ENCODE measurements at regions of chr11 and their contacts with region 1.

Region 1: DNA sequence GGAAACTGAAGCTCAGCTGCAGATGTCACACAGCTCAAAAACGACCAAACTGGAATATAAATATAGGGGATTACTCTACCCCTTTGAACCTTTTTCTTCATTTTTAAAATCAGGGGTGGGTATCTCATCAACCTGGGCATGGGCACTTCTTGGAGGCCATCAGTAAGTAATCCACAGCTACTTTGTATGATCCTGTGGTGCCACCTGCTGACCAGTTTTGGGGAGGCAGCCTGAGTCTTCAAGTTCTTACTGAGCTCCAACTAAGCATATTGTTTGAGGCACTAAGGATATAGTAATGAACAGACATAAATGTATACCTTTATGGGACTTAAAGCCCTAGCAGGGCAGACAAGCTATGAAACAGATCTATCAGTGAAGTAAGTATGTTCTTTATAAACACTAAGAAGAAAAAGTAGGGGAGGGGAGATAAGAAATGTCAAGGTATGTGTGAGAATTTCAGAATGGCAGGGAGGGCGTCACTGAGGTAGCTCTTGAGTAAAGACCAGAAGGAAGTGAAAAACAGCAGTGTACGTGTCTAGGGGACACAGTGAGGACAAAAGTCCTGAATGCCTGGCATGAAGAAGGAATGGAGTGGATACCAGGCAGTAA is 18.4 kb downstream of the TUB start:
- DNase-seq: peak; percentile 84
- ATAC-seq: peak; percentile 78
- H3K4me3 Mint-ChIP-seq: no peak overlapping the region
- H3K27ac Mint-ChIP-seq: no peak overlapping the region
- H3K4me1 Mint-ChIP-seq: no peaks in the 10 kb centered on the region
- H3K27me3 Mint-ChIP-seq: no peaks in the 10 kb centered on the region
- CTCF ChIP-seq: no peak; the same call in none of the 2 replicates

Region 2: GRCh38 chr11:7892840-7893254 is 206.5 kb before region 1 on chr11:
- CTCF ChIA-PET with region 1: interaction called, 12 read pairs
- POLR2A ChIA-PET with region 1: no interaction called
- DNase-seq: no peak
- ATAC-seq: peak; percentile 83
- H3K4me3 Mint-ChIP-seq: no peak overlapping the region
- H3K27ac Mint-ChIP-seq: no peak overlapping the region
- H3K4me1 Mint-ChIP-seq: peaks cover 6% of the 10 kb centered on the region
- H3K27me3 Mint-ChIP-seq: peaks cover 14% of the 10 kb centered on the region
- CTCF ChIP-seq: peak; percentile 52

Region 3: GRCh38 chr11:7936615-7937014 is 162.8 kb before region 1 on chr11:
- CTCF ChIA-PET with region 1: no interaction called
- POLR2A ChIA-PET with region 1: no interaction called
- DNase-seq: no peak
- ATAC-seq: no peak
- H3K4me3 Mint-ChIP-seq: no peak overlapping the region
- H3K27ac Mint-ChIP-seq: no peak overlapping the region
- H3K4me1 Mint-ChIP-seq: peaks cover 6% of the 10 kb centered on the region; the same call in 1 of the 2 replicates
- H3K27me3 Mint-ChIP-seq: no peaks in the 10 kb centered on the region
- CTCF ChIP-seq: no peak

Region 4: DNA sequence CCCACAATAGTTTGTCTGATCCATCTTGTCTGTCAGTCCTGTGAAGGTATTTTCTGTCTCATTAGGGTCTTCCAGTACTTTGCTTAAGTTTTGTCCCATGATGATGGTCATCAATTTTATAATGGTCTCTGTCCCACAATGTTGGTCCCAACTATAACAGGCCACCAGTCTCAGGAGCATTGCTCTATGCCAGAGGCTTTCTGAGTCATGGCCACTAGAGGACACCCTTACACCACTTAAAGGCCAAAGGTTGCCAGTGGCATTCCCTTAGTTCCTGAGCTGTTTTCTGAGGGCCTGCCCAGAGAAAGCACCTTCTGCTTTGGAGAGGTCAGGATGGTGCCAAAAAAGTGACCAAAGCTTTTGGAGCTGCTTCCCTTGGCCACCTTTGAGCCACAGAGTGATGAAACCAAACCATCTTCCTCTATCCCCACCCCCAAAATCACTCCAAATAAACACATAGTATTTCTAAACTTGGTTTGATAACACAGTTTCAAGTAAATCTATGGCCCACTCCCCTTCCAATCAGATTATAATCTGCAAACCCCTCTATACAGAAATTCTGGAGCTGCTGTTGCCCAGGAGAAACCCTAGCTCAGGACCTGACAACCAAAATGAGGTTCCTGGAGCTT is 92.9 kb before region 1 on chr11:
- CTCF ChIA-PET with region 1: interaction called, 133 read pairs
- POLR2A ChIA-PET with region 1: interaction called, 3 read pairs
- DNase-seq: peak; percentile 75
- ATAC-seq: peak; percentile 96
- H3K4me3 Mint-ChIP-seq: no peak overlapping the region
- H3K27ac Mint-ChIP-seq: no peak overlapping the region
- H3K4me1 Mint-ChIP-seq: no peaks in the 10 kb centered on the region
- H3K27me3 Mint-ChIP-seq: no peaks in the 10 kb centered on the region; the same call in 1 of the 2 replicates
- CTCF ChIP-seq: peak; percentile 71

Region 5: GRCh38 chr11:8033305-8034105 is 65.9 kb before region 1 on chr11:
- CTCF ChIA-PET with region 1: interaction called, 73 read pairs
- POLR2A ChIA-PET with region 1: interaction called, 5 read pairs
- DNase-seq: peak; percentile 78
- ATAC-seq: peak; percentile 92
- H3K4me3 Mint-ChIP-seq: peak overlapping the region; percentile 51
- H3K27ac Mint-ChIP-seq: no peak overlapping the region
- H3K4me1 Mint-ChIP-seq: peaks cover 15% of the 10 kb centered on the region
- H3K27me3 Mint-ChIP-seq: peaks cover 10% of the 10 kb centered on the region
- CTCF ChIP-seq: peak; percentile 29; the same call in 1 of the 2 replicates

Region 6: GRCh38 chr11:8070417-8071115 is 28.8 kb before region 1 on chr11:
- CTCF ChIA-PET with region 1: interaction called, 18 read pairs
- POLR2A ChIA-PET with region 1: no interaction called
- DNase-seq: no peak
- ATAC-seq: peak; percentile 40
- H3K4me3 Mint-ChIP-seq: no peak overlapping the region
- H3K27ac Mint-ChIP-seq: no peak overlapping the region
- H3K4me1 Mint-ChIP-seq: peaks cover 48% of the 10 kb centered on the region
- H3K27me3 Mint-ChIP-seq: peaks cover 12% of the 10 kb centered on the region; the same call in 1 of the 2 replicates
- CTCF ChIP-seq: no peak

Region 7: GRCh38 chr11:8111636-8112035 is 12.2 kb after region 1 on chr11:
- CTCF ChIA-PET with region 1: interaction called, 18 read pairs
- POLR2A ChIA-PET with region 1: no interaction called
- DNase-seq: no peak
- ATAC-seq: no peak
- H3K4me3 Mint-ChIP-seq: no peak overlapping the region
- H3K27ac Mint-ChIP-seq: no peak overlapping the region
- H3K4me1 Mint-ChIP-seq: no peaks in the 10 kb centered on the region
- H3K27me3 Mint-ChIP-seq: no peaks in the 10 kb centered on the region
- CTCF ChIP-seq: no peak

Region 8: DNA sequence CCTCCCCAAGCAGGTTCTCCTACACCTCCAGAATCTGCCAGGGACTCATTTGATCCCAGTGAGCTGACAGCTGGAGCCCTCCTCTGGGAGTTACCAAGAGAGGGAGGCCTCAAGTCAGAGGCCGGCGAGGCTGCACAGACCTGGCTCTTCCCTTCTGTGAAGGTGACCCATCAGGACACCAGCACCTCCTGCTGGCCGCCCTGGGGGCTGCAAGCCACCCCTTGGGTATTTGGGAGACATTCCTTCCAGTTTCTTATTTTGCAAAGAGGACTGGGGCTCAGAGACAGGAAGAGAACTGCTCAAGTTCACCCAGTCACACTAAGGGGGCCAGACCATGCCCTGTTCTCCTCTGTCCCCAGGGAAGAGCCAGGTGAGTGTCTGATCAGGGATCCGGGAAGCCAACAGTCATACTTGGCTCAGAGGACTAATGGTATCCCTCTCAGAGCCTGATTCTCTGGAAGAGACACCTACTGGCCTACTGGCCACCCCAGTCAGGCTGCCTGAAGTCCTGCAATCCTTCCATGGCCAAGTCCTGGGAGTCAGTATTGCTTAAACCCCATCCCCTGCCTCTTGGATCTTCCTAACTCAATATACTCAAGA is 109.9 kb after region 1 on chr11:
- CTCF ChIA-PET with region 1: no interaction called
- POLR2A ChIA-PET with region 1: no interaction called
- DNase-seq: peak; percentile 82
- ATAC-seq: peak; percentile 61
- H3K4me3 Mint-ChIP-seq: no peak overlapping the region
- H3K27ac Mint-ChIP-seq: no peak overlapping the region
- H3K4me1 Mint-ChIP-seq: peaks cover 16% of the 10 kb centered on the region
- H3K27me3 Mint-ChIP-seq: no peaks in the 10 kb centered on the region
- CTCF ChIP-seq: peak; percentile 72

Region 9: DNA sequence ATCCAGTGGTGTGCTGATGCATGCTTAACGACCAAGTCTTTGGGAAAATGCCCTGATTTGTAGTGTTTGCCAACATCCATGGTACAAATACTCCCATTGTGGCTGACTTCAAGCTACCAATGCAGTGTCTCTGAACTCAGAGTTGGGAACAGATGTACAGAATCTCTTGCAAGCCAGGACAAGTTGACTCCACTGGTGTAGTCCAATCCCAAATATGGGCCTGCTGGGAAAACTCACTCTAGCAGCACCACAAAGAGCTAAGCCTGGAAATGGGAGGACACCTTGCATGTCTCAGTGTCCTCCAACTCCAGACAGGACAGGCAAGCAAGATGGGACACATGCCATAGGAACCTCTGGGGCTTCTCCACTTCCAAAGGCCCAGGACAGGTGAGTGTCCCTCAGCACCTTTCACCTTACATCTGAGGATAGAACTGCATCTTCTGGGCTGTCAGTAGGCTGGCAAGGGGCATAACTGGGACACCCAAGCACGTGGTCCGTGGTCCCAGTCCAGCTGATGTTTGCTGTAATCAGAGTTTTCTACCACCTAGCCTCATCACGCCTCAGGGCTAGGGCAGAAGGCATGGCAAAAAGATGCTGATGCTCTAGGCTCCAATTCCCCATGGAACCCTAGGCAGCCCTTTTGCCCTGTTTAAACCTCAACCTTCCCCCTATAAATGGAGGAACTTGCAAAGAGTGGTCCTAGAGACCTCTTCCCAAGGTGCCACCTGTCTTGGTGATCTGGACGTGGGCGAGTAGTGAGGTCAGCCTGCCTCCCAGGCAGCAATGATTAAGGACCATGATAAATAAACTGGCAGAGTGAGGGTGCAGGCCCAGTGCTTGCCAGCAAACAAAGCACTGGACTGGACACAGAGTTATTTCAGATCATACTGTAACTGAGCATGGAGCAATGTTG is 157.9 kb after region 1 on chr11:
- CTCF ChIA-PET with region 1: no interaction called
- POLR2A ChIA-PET with region 1: no interaction called
- DNase-seq: no peak
- ATAC-seq: no peak
- H3K4me3 Mint-ChIP-seq: no peak overlapping the region
- H3K27ac Mint-ChIP-seq: no peak overlapping the region
- H3K4me1 Mint-ChIP-seq: peaks cover 7% of the 10 kb centered on the region; the same call in 1 of the 2 replicates
- H3K27me3 Mint-ChIP-seq: peaks cover 33% of the 10 kb centered on the region
- CTCF ChIP-seq: no peak

Measured in WTC11 (cell line).